IMR-90 (cell line): ENCODE measurements at regions of chr22 and their contacts with region 1.

Region 1: GRCh38 chr22:32622004-32622743 is 147.6 kb downstream of the FBXO7 start:
- DNase-seq: peak; percentile 94
- ATAC-seq: peak; percentile 88
- H3K4me3 ChIP-seq: no peak overlapping the region
- H3K27ac ChIP-seq: peak overlapping the region; percentile 99
- H3K4me1 ChIP-seq: peaks cover 41% of the 10 kb centered on the region
- H3K27me3 ChIP-seq: no peaks in the 10 kb centered on the region
- CTCF ChIP-seq: no peak
- POLR2A ChIP-seq: no peak
- RAD21 ChIP-seq: no peak

Region 2: DNA sequence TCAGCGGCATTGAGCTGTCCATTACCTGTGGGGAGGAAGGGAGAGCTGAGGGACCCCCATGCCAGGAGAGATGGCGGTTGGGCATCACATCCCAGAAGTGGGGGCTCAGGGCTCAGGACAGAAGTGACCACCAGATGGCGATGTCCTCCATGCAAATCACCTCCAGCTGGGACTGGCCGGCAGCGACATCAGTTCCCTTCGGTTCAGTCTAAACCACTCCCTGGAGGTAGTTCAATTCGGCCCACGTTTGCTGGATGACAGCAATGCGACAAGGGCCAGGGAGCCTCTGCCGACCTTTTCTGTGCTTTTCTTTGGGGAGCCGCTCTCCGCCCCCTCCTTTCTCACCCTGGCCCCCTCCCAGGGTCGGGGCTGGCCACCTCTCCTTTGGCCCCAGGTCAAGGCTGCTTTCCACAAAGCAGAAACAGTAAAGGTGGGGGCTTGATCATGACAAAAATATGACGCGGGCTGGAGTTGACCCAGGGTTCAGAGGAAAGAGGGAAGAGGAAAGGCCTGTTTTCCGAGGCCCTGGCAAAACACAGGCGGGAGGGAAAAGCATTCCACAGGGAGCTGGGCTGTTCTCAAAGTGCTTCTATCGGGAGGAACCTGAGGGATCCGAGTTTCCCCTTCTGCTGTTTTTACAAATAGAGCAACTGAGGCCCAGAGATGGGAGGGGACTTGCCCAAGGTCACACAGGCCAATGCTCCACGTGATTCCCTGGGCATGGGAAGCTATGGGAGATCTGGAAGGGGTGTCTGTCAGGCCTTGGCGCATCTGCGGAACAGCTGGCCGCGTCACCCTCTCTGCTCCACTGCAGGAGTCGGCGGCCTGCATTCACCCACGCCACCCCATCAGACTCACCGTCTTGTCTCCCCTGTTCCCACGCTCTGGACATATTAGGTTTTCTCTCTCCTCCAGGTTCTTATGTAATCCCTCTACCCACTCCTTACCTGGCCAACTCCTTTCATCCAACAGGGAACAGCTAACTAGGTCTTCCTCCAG is 92.9 kb before region 1 on chr22:
- CTCF ChIA-PET with region 1: interaction called, 4 read pairs
- POLR2A ChIA-PET with region 1: interaction called, 14 read pairs
- dilution Hi-C with region 1: no loop called
- in situ Hi-C with region 1: loop called (anchors 5 kb)
- intact Hi-C with region 1: loop called (anchors 2 kb)
- DNase-seq: peak; percentile 86
- ATAC-seq: peak; percentile 78
- H3K4me3 ChIP-seq: no peak overlapping the region
- H3K27ac ChIP-seq: peak overlapping the region; percentile 1; the same call in 1 of the 2 replicates
- H3K4me1 ChIP-seq: peaks cover 23% of the 10 kb centered on the region
- H3K27me3 ChIP-seq: no peaks in the 10 kb centered on the region
- CTCF ChIP-seq: peak; percentile 95
- POLR2A ChIP-seq: peak; percentile 67
- RAD21 ChIP-seq: peak; percentile 100

Region 3: DNA sequence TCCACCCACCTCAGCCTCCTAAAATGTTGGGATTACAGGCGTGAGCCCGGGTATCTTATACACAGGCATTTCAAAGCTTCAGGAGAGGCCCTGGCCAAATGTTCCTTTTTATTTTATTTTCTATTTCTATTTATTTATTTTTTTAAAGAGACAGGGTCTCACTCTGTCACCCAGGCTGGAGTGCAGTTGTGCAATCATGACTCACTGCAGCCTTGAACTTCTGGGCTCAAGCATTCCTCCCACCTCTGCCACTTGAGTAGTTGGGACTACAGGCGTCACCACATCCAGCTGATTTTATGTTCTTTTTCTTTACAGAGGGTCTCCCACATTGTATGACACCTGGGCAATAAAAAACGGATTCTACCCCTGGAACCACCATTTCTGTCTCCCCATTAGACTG is 76.4 kb before region 1 on chr22:
- CTCF ChIA-PET with region 1: no interaction called
- POLR2A ChIA-PET with region 1: no interaction called
- dilution Hi-C with region 1: no loop called
- in situ Hi-C with region 1: no loop called
- intact Hi-C with region 1: loop called (anchors 1 kb)
- DNase-seq: peak; percentile 45
- ATAC-seq: peak; percentile 50
- H3K4me3 ChIP-seq: no peak overlapping the region
- H3K27ac ChIP-seq: peak overlapping the region; percentile 32; the same call in 1 of the 2 replicates
- H3K4me1 ChIP-seq: peaks cover 21% of the 10 kb centered on the region
- H3K27me3 ChIP-seq: peaks cover 6% of the 10 kb centered on the region; the same call in 1 of the 2 replicates
- CTCF ChIP-seq: no peak
- POLR2A ChIP-seq: no peak
- RAD21 ChIP-seq: no peak

Region 4: GRCh38 chr22:32591620-32592019 is 30.6 kb before region 1 on chr22:
- CTCF ChIA-PET with region 1: interaction called, 3 read pairs
- POLR2A ChIA-PET with region 1: no interaction called
- dilution Hi-C with region 1: no loop called
- in situ Hi-C with region 1: no loop called
- intact Hi-C with region 1: loop called (anchors 2 kb)
- DNase-seq: peak; percentile 88
- ATAC-seq: peak; percentile 93
- H3K4me3 ChIP-seq: no peak overlapping the region
- H3K27ac ChIP-seq: 0 out of 2 replicates have a peak overlapping the region, but pooled peaks have one; percentile 18
- H3K4me1 ChIP-seq: no peaks in the 10 kb centered on the region
- H3K27me3 ChIP-seq: peaks cover 12% of the 10 kb centered on the region; the same call in 1 of the 2 replicates
- CTCF ChIP-seq: no peak
- POLR2A ChIP-seq: no peak
- RAD21 ChIP-seq: no peak

Region 5: DNA sequence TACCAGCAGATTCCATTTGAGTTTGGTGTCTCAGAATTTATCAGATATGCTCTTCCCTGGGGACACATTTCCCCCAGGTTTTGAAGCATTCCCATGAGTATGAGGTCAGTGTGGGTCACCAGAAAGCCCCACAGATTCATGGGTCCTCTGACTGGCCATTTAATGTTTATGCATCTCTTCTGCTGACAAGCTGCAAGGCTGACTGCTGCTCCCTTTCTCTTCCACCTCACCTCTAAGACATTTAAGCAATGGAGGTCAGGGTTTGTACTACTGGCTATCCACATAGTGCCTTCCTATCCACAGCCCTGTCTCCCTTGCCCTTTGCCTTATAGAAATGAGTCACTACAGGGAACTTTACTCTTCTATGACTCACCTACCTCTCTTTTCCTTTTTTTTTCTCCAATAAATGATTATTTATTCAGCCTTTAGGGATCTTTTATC is 73.3 kb after region 1 on chr22:
- CTCF ChIA-PET with region 1: no interaction called
- POLR2A ChIA-PET with region 1: no interaction called
- dilution Hi-C with region 1: no loop called
- in situ Hi-C with region 1: no loop called
- intact Hi-C with region 1: loop called (anchors 5 kb)
- DNase-seq: peak; percentile 95
- ATAC-seq: peak; percentile 89
- H3K4me3 ChIP-seq: no peak overlapping the region
- H3K27ac ChIP-seq: peak overlapping the region; percentile 6; the same call in 1 of the 2 replicates
- H3K4me1 ChIP-seq: peaks cover 18% of the 10 kb centered on the region
- H3K27me3 ChIP-seq: no peaks in the 10 kb centered on the region
- CTCF ChIP-seq: no peak
- POLR2A ChIP-seq: no peak
- RAD21 ChIP-seq: no peak; the same call in 1 of the 2 replicates

Region 6: DNA sequence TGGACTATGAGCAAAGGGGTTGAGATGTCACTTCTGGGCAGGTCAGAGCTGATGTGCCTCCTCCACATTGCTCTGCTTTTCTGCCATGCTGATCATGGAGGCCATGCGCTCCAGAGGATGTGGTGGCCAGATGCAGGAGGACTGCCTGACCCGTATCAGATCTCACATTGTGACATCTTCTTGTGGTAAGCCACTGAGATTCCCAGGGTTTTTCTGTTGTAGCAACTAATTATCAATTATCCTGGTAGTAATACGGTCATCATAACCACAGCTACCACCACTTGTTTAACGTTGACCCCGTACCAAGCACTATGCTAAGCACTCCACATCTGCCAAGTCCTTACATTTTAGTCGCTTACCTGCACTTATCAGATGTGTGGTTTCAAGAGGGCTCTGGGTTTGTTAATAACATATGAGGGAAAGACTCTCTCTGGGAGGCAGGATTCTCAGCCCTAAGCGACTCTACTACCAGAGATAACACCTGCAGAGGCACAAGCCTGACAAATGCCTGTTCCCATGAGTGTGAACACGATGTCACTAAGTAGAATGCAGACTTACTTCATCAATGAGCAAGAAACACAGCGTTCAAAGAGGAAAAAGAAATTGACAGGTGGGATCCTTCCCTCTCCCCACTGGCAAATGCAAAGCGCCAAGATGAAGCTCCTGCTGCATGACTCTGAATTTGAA is 115.8 kb after region 1 on chr22:
- CTCF ChIA-PET with region 1: no interaction called
- POLR2A ChIA-PET with region 1: no interaction called
- dilution Hi-C with region 1: no loop called
- in situ Hi-C with region 1: no loop called
- intact Hi-C with region 1: no loop called
- DNase-seq: peak; percentile 23
- ATAC-seq: no peak
- H3K4me3 ChIP-seq: no peak overlapping the region
- H3K27ac ChIP-seq: no peak overlapping the region
- H3K4me1 ChIP-seq: no peaks in the 10 kb centered on the region
- H3K27me3 ChIP-seq: peaks cover 8% of the 10 kb centered on the region
- CTCF ChIP-seq: no peak
- POLR2A ChIP-seq: no peak
- RAD21 ChIP-seq: no peak

Region 7: GRCh38 chr22:32951076-32951806 is 329.1 kb after region 1 on chr22:
- CTCF ChIA-PET with region 1: no interaction called
- POLR2A ChIA-PET with region 1: interaction called, 11 read pairs
- dilution Hi-C with region 1: no loop called
- in situ Hi-C with region 1: no loop called
- intact Hi-C with region 1: no loop called
- DNase-seq: no peak
- ATAC-seq: no peak
- H3K4me3 ChIP-seq: no peak overlapping the region
- H3K27ac ChIP-seq: no peak overlapping the region
- H3K4me1 ChIP-seq: no peaks in the 10 kb centered on the region
- H3K27me3 ChIP-seq: peaks cover 4% of the 10 kb centered on the region
- CTCF ChIP-seq: no peak
- POLR2A ChIP-seq: no peak
- RAD21 ChIP-seq: no peak

Region 8: GRCh38 chr22:32985899-32986765 is 364.0 kb after region 1 on chr22:
- CTCF ChIA-PET with region 1: no interaction called
- POLR2A ChIA-PET with region 1: no interaction called
- dilution Hi-C with region 1: no loop called
- in situ Hi-C with region 1: no loop called
- intact Hi-C with region 1: loop called (anchors 10 kb)
- DNase-seq: peak; percentile 71
- ATAC-seq: peak; percentile 100
- H3K4me3 ChIP-seq: no peak overlapping the region
- H3K27ac ChIP-seq: no peak overlapping the region
- H3K4me1 ChIP-seq: no peaks in the 10 kb centered on the region
- H3K27me3 ChIP-seq: peaks cover 3% of the 10 kb centered on the region
- CTCF ChIP-seq: peak; percentile 86
- POLR2A ChIP-seq: no peak
- RAD21 ChIP-seq: peak; percentile 90